HEK293 (cell line): ENCODE measurements at regions of chr5 and their contacts with region 1.

Region 1: GRCh38 chr5:173887610-173888472 is at the start of gene CPEB4:
- H3K4me3 ChIP-seq: peak within 1 kb of the TSS; percentile 81
- H3K27ac ChIP-seq: peak within 1 kb of the TSS; percentile 97
- H3K4me1 ChIP-seq: peaks cover 9% of the 10 kb centered on the region
- CTCF ChIP-seq: 0 out of 2 replicates have a peak, but pooled peaks have one; percentile 7

Region 2: DNA sequence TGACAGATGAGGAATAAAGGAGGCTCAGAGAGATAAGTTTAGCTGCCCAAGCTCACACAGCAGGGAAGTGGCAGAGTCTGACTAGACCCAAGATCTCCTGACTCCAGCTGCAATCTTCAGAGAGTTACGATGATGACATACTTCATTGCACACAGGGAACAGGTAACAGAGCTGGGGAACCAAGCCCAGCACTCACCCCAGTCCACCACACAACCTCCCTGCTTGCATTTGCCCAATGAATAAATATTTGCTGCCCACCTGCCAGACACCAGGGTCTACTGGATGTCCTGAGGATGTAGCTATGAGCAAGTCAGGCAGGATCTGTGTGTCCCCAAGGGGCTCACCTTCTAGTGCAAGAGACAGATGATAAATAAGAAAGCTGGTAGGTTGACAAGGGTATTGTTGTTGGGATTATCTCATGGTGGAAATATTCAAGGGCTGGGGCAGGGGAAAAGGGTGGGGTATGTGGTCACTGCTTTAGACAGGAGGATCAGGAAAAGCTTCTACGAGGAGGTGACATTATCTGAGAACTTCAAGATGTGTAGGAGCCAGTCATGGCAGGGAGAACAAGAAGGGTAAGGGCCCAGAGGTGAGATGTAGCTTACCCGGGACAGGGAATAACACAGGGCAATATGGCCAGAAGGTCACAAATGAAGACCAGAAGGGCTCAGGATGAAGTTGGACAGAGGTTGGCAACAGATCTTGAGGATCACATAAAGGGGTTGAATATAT is 28.2 kb before region 1 on chr5:
- CTCF ChIA-PET with region 1: no interaction called
- POLR2A ChIA-PET with region 1: interaction called, 12 read pairs
- H3K4me3 ChIP-seq: no peak overlapping the region
- H3K27ac ChIP-seq: no peak overlapping the region
- H3K4me1 ChIP-seq: peaks cover 8% of the 10 kb centered on the region
- CTCF ChIP-seq: no peak

Region 3: GRCh38 chr5:174217527-174217926 is 329.7 kb after region 1 on chr5:
- CTCF ChIA-PET with region 1: no interaction called
- POLR2A ChIA-PET with region 1: no interaction called
- H3K4me3 ChIP-seq: no peak overlapping the region
- H3K27ac ChIP-seq: no peak overlapping the region
- H3K4me1 ChIP-seq: no peaks in the 10 kb centered on the region
- CTCF ChIP-seq: no peak